ENCODE measurements at regions of chr14 and their contacts with region 1.

Region 1: DNA sequence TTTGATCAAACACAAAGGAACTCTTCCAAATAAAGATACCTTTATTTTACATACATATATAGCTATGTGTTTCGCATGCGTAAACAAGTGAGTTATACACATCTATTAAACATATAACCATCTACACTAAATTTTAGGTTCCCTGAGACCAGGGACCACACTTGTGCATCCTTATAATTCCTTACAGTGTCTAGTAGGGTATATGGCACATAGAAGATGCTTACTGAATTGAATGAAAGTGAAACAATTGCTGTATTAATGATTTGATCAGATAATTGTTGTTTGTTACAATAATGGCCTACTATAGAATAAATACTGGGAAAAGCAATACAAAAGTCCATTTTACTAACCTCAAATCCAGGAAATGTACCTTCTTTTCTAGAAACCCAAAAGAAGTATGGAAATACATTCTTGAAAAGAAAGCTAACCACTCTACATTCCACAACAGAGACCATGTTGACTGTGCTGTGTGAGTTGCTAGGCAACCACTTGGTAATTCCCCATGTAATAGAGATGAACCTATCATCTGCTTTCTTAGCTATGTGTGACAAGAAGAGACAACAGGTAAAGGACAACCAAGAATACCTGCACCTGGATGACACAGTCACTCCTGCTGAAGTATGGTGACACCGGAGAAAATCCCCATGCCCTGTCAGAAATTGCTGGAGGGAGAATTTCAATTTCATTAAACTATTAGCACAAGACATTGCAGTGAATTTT is 11.9 kb upstream of the CIPC start:
- DNase-seq: no peak

Region 2: GRCh38 chr14:77067632-77068514 is 18.3 kb before region 1 on chr14:
- CTCF ChIA-PET with region 1: interaction called, 16 read pairs
- POLR2A ChIA-PET with region 1: no interaction called
- DNase-seq: peak; percentile 76

Region 3: DNA sequence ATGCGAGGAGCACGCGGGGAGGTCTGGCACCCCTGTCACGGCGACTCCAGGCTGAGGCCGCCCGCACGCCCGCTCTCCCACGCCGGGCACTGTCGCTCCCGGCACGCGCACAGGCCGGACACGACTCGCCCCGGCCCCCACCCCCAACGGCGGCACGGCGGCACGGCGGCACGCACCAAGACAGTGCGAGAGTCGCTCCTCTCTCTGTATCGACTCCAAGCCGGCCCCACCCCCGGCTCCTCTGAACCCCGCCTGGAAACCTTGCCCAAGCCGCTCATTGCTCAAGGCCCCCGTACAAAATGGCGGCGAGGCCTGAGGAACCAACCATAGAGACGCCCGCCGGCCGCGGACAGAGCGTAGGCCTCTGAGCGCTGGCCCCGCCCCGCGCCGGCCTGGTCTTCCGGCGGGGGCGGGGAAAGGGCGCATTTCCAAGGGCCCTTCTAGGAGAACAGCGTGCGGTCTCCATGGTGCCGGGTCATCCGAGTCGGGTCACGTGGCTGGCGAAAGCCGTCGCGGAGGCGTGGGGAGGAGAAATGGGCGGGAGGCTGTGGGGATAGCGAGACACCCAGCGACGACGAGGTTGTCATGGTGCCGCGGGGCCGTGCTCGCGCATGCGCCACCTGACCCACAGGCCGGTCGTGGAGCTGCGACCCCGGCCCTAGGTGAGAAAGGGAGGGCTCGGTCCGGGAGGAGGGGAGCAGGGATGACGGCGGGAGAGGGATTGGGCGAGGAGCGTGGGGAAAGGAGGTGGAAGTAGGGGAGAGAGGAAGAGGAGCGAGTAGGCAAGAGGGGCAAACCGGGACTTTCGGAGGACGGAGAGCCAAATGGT is 11.7 kb after region 1 on chr14 and contains the start of gene CIPC:
- CTCF ChIA-PET with region 1: interaction called, 14 read pairs
- POLR2A ChIA-PET with region 1: interaction called, 11 read pairs
- DNase-seq: peak; percentile 97

Measured in HEK293T (cell line).